BJ (cell line): ENCODE measurements at regions of chr1 and their contacts with region 1.

Region 1: GRCh38 chr1:10867138-10867721 is 70.8 kb upstream of the CASZ1 start:
- DNase-seq: no peak
- H3K4me3 ChIP-seq: peak overlapping the region; percentile 41
- H3K27me3 ChIP-seq: peaks cover 21% of the 10 kb centered on the region
- CTCF ChIP-seq: 0 out of 2 replicates have a peak, but pooled peaks have one; percentile 4

Region 2: GRCh38 chr1:10507111-10507879 is 359.9 kb before region 1 on chr1:
- CTCF ChIA-PET with region 1: interaction called, 99 read pairs
- POLR2A ChIA-PET with region 1: no interaction called
- DNase-seq: no peak
- H3K4me3 ChIP-seq: no peak overlapping the region
- H3K27me3 ChIP-seq: no peaks in the 10 kb centered on the region
- CTCF ChIP-seq: peak; percentile 93

Region 3: DNA sequence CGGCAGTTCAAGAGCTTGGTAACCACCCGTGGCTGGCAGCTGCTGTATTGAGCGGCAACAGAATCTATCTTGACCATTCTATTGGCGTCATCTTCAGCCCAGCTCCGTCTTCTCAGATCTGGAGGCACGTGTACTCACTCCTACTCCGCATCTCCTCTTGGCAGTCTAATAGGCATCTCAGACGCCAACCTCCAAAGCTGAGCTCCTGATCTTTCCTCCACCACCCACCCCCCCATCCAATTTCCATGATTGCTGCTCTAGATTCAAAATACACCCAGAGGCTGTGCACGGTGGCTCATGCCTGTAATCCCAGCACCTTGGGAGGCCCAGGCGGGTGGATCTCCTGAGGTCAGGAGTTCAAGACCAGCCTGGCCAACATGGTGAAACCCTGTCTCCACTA is 13.8 kb after region 1 on chr1:
- CTCF ChIA-PET with region 1: interaction called, 19 read pairs
- POLR2A ChIA-PET with region 1: no interaction called
- DNase-seq: no peak
- H3K4me3 ChIP-seq: no peak overlapping the region
- H3K27me3 ChIP-seq: peaks cover 4% of the 10 kb centered on the region
- CTCF ChIP-seq: no peak

Region 4: DNA sequence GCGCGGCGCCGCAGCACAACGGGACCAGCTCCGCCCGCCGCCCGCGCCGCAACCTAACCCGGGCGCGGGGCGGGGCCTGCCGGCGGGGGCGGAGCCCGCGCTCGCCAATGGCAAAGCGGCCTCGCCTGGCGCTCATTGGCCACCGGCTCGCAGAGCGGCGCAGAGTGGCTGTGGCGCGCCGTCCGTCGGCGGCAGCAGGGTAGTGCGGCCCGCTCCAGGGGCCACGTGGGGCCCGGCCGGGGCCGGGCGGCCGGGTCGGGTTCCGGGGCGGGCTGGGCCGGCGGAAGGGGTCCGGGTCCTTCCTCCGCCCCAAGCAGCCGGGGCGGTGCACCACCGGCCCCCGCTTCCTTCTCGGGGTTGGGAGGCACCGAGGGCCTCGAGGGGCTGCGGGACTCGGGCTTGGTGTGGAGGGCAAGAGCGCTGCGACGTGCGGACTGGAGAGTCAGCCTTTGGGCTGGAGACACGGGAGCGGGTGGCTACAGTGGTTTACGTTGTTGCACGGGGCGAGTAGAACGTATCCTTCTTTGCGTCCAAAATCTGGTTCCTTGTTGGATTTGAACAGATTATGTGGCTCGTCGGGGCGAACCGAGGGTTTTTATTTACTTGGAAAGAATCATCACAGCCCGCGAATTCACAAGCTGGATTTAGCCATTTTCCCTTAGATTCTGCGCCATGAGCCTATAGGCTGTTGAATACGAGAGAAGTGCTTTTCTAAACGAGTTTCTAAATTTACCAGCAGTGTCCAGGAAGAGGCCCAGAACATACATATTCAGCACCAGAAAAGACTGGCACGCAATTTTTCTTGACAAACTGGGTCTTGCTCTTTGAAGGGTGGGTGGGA is 193.0 kb after region 1 on chr1 and contains the start of gene SRM:
- CTCF ChIA-PET with region 1: no interaction called
- POLR2A ChIA-PET with region 1: no interaction called
- DNase-seq: peak; percentile 55
- H3K4me3 ChIP-seq: peak within 1 kb of the TSS; percentile 96
- H3K27me3 ChIP-seq: no peaks in the 10 kb centered on the region
- CTCF ChIP-seq: no peak
- polyA plus RNA-seq, gene SRM: 47.5 and 75.2 TPM in 2 replicates